ENCODE measurements at regions of chr5 and their contacts with region 1.

Region 1: DNA sequence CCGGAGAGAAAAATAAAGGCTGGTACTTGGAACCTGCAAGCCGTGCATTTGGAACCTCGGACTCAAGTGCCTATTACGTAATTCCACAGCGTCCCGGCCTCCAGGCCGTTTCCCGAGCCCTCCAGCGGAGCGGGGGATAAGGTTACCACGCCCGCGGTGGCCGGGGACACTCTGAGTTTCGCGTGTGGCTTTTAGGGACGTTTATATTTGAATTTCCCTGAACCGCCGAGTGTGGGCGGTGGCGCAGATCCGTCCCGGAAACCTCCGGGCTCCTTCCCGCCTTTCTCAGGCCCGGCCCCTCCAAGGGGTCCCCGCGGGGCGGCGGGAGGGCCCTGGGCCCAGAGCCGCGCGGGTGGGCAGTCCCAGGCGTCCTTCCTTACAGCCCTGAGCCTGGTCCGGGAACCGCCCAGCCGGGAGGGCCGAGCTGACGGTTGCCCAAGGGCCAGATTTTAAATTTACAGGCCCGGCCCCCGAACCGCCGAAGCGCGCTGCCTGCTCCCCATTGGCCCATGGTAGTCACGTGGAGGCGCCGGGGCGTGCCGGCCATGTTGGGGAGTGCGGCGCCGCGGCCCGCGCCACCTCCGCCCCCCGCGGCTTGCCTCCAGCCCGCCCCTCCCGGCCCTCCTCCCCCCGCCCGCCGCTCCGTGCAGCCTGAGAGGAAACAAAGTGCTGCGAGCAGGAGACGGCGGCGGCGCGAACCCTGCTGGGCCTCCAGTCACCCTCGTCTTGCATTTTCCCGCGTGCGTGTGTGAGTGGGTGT is at the start of gene LMNB1:
- DNase-seq: peak; percentile 95
- H3K4me3 ChIP-seq: peak within 1 kb of the TSS; percentile 76 to 89 (median 85)
- H3K27ac ChIP-seq: peak within 1 kb of the TSS; percentile 85
- H3K4me1 ChIP-seq: peaks cover 24% of the 10 kb centered on the region
- H3K27me3 ChIP-seq: no peaks in the 10 kb centered on the region
- CTCF ChIP-seq: no peak
- POLR2A ChIP-seq: no peak
- total RNA-seq, gene LMNB1: 134 and 144 TPM in 2 replicates

Region 2: DNA sequence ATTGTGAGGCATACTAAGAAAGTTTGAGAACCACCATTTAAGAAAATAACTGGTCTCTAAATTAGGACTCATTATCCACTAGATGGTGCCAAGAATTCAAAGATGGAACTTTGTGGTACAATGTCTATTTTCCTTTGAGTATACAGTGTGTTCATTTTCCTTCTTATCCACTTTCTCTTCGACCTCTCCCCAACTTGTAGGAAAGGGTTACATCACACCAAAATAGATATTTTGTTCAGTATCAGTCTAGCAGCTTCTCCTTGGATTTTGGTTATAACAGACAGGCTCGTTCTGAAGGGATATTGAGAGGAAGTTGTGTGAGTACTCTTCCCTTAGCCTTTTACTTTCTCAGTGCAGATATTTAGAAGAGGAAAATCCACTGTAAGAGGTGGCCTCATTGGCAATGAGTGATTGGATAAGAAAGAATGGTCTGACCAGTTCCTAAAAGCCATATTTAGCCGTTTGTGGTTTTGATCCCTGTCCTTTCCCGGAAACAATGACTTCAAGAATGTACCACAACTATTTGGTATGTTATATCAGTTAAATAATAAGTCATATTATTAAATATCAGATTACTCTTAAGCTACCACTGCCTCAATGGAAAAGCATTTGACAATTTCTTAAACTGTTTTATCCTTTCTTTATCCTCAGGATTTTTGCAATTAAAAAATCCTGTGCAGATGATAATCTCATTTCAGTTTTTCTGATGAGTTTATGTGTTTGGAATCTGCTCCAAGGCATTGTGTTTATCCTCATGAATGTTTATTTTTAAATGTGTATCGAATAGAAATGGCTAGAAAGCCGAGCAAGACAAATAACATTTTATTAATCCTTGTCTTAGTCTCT is 422.4 kb before region 1 on chr5:
- CTCF ChIA-PET with region 1: no interaction called
- POLR2A ChIA-PET with region 1: no interaction called
- dilution Hi-C with region 1: no loop called
- intact Hi-C with region 1: loop called (anchors 5 kb)
- DNase-seq: peak; percentile 74
- H3K4me3 ChIP-seq: peak overlapping the region in 1 of 3 experiments; percentile 51
- H3K27ac ChIP-seq: peak overlapping the region; percentile 81
- H3K4me1 ChIP-seq: peaks cover 36% of the 10 kb centered on the region
- H3K27me3 ChIP-seq: peaks cover 0 to 14% of the 10 kb centered on the region in 2 experiments
- CTCF ChIP-seq: peak in 1 of 2 donors; percentile 9
- POLR2A ChIP-seq: no peak

Region 3: GRCh38 chr5:126656396-126657007 is 120.2 kb before region 1 on chr5:
- CTCF ChIA-PET with region 1: interaction called, 9 read pairs
- POLR2A ChIA-PET with region 1: no interaction called
- dilution Hi-C with region 1: no loop called
- intact Hi-C with region 1: loop called (anchors 1 kb)
- DNase-seq: peak; percentile 47
- H3K4me3 ChIP-seq: no peak overlapping the region
- H3K27ac ChIP-seq: no peak overlapping the region
- H3K4me1 ChIP-seq: no peaks in the 10 kb centered on the region
- H3K27me3 ChIP-seq: no peaks in the 10 kb centered on the region
- CTCF ChIP-seq: peak; percentile 61 to 62
- POLR2A ChIP-seq: no peak

Region 4: GRCh38 chr5:126794157-126794828 is 17.6 kb after region 1 on chr5:
- CTCF ChIA-PET with region 1: interaction called, 10 read pairs
- POLR2A ChIA-PET with region 1: interaction called, 7 read pairs
- dilution Hi-C with region 1: no loop called
- intact Hi-C with region 1: no loop called
- DNase-seq: no peak
- H3K4me3 ChIP-seq: no peak overlapping the region
- H3K27ac ChIP-seq: no peak overlapping the region
- H3K4me1 ChIP-seq: no peaks in the 10 kb centered on the region
- H3K27me3 ChIP-seq: no peaks in the 10 kb centered on the region
- CTCF ChIP-seq: no peak
- POLR2A ChIP-seq: no peak

Region 5: DNA sequence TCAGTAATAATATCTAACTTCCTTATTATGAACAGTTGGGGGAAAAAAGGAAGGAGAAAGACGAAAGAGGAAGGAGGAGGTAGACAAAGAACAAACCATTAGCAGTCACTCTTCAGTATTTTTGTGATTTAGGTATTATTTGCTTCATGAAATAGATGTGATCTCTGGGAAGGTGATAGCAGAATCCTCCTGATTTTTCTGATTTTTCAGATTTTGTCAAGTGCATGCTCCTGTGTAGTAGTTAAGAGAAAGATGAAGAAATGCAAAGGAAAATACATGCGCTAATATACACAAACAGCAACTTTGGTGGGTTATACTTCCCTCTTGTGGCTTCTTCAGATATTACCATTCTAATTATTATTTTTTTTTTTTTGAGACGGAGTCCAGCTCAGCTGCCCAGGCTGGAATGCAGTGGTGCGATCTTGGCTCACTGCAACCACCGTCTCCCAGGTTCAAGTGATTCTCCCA is 31.9 kb after region 1 on chr5:
- CTCF ChIA-PET with region 1: interaction called, 47 read pairs
- POLR2A ChIA-PET with region 1: interaction called, 7 read pairs
- dilution Hi-C with region 1: no loop called
- intact Hi-C with region 1: loop called (anchors 1 kb)
- DNase-seq: peak; percentile 53
- H3K4me3 ChIP-seq: no peak overlapping the region
- H3K27ac ChIP-seq: no peak overlapping the region
- H3K4me1 ChIP-seq: peaks cover 39% of the 10 kb centered on the region
- H3K27me3 ChIP-seq: no peaks in the 10 kb centered on the region
- CTCF ChIP-seq: peak; percentile 13 to 40
- POLR2A ChIP-seq: no peak

Region 6: DNA sequence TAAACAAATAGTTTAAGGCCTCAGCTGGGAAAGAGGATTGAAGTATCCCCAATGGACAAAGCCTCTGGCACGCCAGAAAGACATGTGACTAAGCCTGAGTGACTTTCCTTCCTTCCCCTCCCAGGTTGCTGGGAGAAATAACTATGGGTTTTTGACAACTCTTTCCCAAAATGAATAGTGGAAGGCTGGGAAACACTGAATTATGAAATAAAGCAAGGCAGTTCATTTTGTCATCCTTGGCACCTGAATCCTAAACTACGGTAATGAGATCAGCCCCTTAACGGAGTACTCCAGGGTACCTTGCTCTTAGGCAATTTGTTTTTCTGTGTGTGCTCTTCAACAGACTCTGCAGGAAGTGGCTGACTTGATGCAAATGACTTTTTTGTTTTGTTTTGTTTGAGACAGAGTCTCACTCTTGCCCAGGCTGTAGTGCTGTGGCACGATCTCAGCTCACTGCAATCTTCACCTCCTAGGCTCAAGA is 75.5 kb after region 1 on chr5:
- CTCF ChIA-PET with region 1: no interaction called
- POLR2A ChIA-PET with region 1: no interaction called
- dilution Hi-C with region 1: no loop called
- intact Hi-C with region 1: no loop called
- DNase-seq: peak; percentile 62
- H3K4me3 ChIP-seq: no peak overlapping the region
- H3K27ac ChIP-seq: peak overlapping the region; percentile 67
- H3K4me1 ChIP-seq: peaks cover 28% of the 10 kb centered on the region
- H3K27me3 ChIP-seq: no peaks in the 10 kb centered on the region
- CTCF ChIP-seq: no peak
- POLR2A ChIP-seq: no peak

Region 7: DNA sequence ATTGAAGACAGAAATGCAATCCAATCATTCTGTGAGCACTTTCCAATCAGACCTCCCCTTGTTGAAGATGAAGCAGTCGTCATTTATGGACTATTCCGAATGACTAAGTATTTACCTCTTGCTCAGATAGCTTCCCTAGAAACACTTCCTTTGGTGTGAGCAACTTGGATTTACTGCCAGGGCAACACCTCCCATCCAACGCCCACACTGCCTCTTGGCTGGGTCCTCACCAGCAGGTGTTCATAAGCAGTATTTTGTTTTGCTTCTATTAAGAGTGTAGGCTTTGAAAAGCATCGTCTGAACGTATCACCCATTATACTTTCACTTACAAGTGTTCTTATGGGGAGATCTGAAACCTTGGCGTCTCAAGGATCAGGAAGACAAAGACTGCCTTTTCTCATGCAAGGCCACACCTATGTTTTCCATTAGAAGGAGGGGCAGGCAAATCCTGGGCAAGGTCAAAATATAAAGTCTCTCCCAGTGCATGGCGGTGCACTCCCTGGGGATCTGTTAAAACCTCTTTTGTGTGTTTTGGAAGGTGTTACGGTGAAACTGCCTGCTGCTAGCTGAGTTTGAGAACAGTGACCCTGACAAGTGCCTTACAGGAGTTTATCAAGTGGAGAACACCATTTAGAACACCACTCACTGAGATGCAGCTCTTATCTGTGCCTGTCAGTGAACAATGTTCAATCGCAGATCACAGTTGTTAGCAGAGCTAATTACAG is 264.3 kb after region 1 on chr5:
- CTCF ChIA-PET with region 1: no interaction called
- POLR2A ChIA-PET with region 1: no interaction called
- dilution Hi-C with region 1: no loop called
- intact Hi-C with region 1: loop called (anchors 2 kb)
- DNase-seq: peak; percentile 87
- H3K4me3 ChIP-seq: peak overlapping the region in 1 of 3 experiments; percentile 19
- H3K27ac ChIP-seq: peak overlapping the region; percentile 87
- H3K4me1 ChIP-seq: peaks cover 33% of the 10 kb centered on the region
- H3K27me3 ChIP-seq: no peaks in the 10 kb centered on the region
- CTCF ChIP-seq: no peak
- POLR2A ChIP-seq: no peak

Region 8: GRCh38 chr5:127517480-127518318 is 741.0 kb after region 1 on chr5 and contains the start of gene PRRC1:
- CTCF ChIA-PET with region 1: no interaction called
- POLR2A ChIA-PET with region 1: no interaction called
- dilution Hi-C with region 1: no loop called
- intact Hi-C with region 1: loop called (anchors 2 kb)
- DNase-seq: peak; percentile 81
- H3K4me3 ChIP-seq: peak within 1 kb of the TSS; percentile 61 to 82 (median 68)
- H3K27ac ChIP-seq: peak within 1 kb of the TSS; percentile 69
- H3K4me1 ChIP-seq: peaks cover 14% of the 10 kb centered on the region
- H3K27me3 ChIP-seq: peaks cover 6 to 11% of the 10 kb centered on the region in 2 experiments
- CTCF ChIP-seq: no peak
- POLR2A ChIP-seq: peak; percentile 82
- total RNA-seq, gene PRRC1: 72.7 and 77.6 TPM in 2 replicates

Measured in endothelial cell of umbilical vein (primary cell).